ENCODE measurements at regions of chr3 and their contacts with region 1.

Region 1: DNA sequence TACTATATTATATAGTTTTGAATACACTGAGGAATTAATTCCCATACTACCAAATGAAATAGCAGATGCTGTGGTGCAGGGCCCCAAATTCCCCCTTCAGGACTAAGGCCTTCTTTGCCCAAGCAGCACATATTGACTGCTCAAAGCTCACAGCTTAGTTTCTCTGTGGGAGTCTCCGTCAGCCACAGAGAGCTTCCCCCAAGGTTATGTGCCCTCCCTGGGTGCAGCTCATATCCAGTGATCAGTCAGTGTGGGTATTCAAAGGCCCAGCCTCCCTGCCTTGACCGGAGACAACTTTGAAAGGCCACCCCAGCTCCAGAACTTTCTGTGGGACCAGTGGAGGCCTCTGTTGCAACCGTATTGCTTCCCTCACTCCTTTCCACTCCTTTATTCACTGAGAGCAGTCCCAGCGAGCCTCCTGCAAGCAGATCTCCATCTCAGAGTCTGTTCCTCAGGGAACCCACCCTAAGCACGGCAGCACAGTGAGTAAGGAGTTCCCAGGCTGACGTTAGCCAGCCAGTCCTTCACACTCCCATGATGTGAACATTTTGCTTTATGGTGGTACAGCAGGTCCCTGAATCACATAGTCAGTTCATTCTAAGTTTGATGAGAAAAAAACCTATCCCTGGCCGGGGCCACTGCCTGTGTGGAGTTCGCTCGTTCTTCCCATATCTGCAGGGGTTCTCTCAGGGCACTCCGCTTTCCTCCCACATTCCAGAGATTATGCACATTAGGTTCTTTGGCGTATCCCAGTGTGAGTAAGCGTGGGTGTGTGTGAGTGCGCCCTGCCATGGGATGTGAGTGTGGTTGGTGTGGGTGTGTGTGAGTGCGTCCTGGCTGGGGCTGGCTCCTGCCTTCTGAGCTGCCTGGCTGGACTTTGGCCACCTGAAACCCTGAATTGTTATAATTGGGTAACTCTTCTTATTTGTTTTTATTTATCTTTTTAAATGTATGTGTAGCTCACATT is 64.4 kb upstream of the PPARG start:
- H3K4me3 Mint-ChIP-seq: no peak overlapping the region
- H3K27ac Mint-ChIP-seq: no peak overlapping the region
- H3K4me1 Mint-ChIP-seq: peaks cover 47% of the 10 kb centered on the region
- H3K27me3 Mint-ChIP-seq: peaks cover 25% of the 10 kb centered on the region

Region 2: DNA sequence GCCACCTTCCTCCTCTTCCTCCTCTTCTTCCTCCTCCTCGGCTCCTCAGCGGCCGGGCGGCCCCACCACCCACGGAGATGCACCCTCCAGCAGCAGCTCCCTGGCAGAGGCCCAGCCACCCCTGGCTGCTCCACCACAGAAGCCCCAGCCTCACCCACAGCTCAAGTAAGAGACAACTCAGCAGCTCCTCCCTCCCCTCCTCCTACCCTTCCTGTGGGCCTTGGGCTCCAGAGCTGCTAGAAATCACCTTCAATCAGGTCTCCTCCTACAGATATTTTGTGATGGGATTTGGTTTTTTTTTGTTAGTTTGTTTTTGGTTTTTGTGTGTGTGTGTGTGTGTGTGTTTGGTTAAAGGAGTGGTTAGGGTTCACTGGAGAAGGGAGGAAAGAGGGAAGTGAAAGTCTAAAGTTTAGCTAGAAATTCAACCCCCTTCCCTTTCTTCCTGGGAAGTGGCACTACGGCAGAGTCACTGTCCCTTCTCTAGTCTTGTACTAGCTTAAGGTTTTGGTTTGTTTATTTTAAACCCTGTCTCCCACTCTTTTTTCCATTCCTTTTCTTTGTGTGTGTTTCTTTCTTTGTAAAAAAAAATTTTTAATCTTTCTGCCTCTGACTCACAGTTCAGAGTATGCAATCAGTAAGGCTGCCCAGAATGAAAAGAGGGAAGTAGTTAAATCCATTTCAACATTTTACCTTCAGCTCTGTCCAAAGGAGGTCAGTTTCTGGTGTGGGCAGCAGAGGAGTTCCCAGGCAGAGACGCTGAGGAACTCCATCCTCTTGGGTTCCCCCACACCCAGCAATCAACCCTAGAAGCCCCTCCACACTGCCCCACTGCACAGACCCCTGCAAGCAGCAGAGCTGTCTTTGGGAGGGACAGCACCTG is 36.8 kb before region 1 on chr3:
- intact Hi-C with region 1: loop called (anchors 5 kb)
- H3K4me3 Mint-ChIP-seq: peak overlapping the region; percentile 68
- H3K27ac Mint-ChIP-seq: peak overlapping the region; percentile 95
- H3K4me1 Mint-ChIP-seq: peaks cover 90% of the 10 kb centered on the region
- H3K27me3 Mint-ChIP-seq: peaks cover 2% of the 10 kb centered on the region

Region 3: DNA sequence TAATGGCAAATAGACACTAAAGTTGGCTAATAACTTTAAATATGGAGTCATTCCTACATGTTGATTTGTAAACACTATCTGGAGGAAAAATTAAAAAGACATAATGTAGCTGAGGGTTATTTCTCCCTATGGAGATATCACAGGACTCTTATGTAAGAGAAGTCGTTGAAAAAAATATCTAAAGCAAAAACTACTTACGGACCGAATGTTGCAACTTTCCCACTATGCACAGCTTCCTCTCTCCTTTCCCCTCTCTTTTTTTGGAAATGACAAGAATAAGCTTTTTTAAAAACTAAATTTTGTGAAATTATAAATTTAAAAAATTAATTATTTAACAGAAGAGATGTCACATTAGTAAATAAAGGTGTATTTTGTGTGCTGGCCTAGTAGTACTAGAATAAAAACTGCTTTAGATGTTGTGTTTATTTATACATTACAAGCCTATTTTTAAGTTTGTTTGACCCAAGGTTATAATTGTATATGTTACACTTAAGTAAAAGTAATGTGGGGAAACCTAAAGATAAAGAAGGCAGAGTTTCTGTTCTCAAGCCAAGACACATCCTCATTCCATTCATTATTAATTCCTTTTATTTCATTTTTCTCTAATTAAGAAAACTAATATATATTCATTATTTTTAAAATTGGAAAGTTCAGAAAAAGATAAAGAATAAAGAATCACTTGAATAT is 43.7 kb after region 1 on chr3:
- intact Hi-C with region 1: loop called (anchors 5 kb)
- H3K4me3 Mint-ChIP-seq: no peak overlapping the region
- H3K27ac Mint-ChIP-seq: no peak overlapping the region
- H3K4me1 Mint-ChIP-seq: peaks cover 13% of the 10 kb centered on the region
- H3K27me3 Mint-ChIP-seq: peaks cover 3% of the 10 kb centered on the region

Measured in dendritic cell treated with granulocyte-macrophage colony-stimulating factor and Interleukin-4, amounts not matched to agents 40 ng/mL and 50 ng/mL, for 4 days (primary cell).